Calu3 (cell line): ENCODE measurements at regions of chr16 and their contacts with region 1.

Region 1: GRCh38 chr16:88785106-88785924 is at the start of gene PIEZO1:
- DNase-seq: peak; percentile 86
- H3K4me3 Mint-ChIP-seq: peak within 1 kb of the TSS; percentile 75
- H3K27ac Mint-ChIP-seq: peak within 1 kb of the TSS; percentile 26
- H3K4me1 Mint-ChIP-seq: peaks cover 37% of the 10 kb centered on the region
- H3K27me3 Mint-ChIP-seq: no peaks in the 10 kb centered on the region
- CTCF ChIP-seq: peak; percentile 96
- total RNA-seq, gene PIEZO1: 177 and 199 TPM in 2 replicates

Region 2: GRCh38 chr16:88737298-88738150 is 47.8 kb before region 1 on chr16:
- CTCF ChIA-PET with region 1: interaction called, 39 read pairs
- intact Hi-C with region 1: no loop called
- DNase-seq: peak; percentile 75
- H3K4me3 Mint-ChIP-seq: no peak overlapping the region
- H3K27ac Mint-ChIP-seq: no peak overlapping the region
- H3K4me1 Mint-ChIP-seq: no peaks in the 10 kb centered on the region
- H3K27me3 Mint-ChIP-seq: no peaks in the 10 kb centered on the region
- CTCF ChIP-seq: peak; percentile 99

Region 3: GRCh38 chr16:88743693-88744576 is 41.4 kb before region 1 on chr16:
- CTCF ChIA-PET with region 1: interaction called, 7 read pairs
- intact Hi-C with region 1: loop called (anchors 2 kb)
- DNase-seq: peak; percentile 94
- H3K4me3 Mint-ChIP-seq: peak overlapping the region; percentile 24
- H3K27ac Mint-ChIP-seq: no peak overlapping the region
- H3K4me1 Mint-ChIP-seq: peaks cover 8% of the 10 kb centered on the region
- H3K27me3 Mint-ChIP-seq: no peaks in the 10 kb centered on the region
- CTCF ChIP-seq: peak; percentile 90

Region 4: DNA sequence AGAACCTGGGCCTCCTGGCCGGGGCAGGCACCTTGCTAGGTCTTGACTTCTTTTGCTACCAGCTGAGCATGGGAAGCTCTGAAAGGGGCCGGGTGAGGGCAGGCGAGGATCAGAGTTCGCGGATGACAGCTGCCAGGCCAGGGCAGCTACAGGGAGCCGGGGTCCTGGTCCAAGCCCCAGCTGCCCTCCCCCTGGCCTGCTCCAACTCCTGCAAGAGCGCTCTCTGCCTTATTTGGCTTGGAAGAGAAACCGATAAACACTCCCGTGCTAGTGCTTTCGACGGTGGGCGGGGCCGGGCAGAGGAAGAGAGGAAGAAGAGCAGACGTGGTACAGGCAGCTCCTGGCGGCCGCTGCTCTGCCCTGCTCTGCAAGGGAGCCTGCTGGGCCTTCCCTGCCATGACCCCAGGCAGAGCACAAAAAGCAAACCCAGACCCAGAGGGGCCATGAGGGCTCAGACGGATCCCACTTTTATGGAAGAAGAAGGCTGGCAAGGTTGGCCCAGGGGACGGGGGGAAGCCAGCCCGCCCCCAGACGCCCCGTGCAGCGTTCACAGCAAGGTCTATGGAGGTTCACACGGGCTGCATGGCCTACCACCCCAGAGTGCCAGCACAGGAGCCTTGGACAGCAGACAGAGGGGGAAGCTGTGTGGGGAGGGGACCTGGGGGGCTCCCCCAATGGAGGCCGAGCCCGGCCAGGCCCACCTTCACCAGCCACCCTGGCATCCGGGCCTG is 25.9 kb before region 1 on chr16:
- CTCF ChIA-PET with region 1: interaction called, 26 read pairs
- intact Hi-C with region 1: no loop called
- DNase-seq: no peak
- H3K4me3 Mint-ChIP-seq: peak overlapping the region; percentile 28
- H3K27ac Mint-ChIP-seq: no peak overlapping the region
- H3K4me1 Mint-ChIP-seq: peaks cover 52% of the 10 kb centered on the region
- H3K27me3 Mint-ChIP-seq: no peaks in the 10 kb centered on the region
- CTCF ChIP-seq: no peak

Region 5: GRCh38 chr16:88821168-88821850 is 36.0 kb after region 1 on chr16:
- CTCF ChIA-PET with region 1: no interaction called
- intact Hi-C with region 1: no loop called
- DNase-seq: no peak
- H3K4me3 Mint-ChIP-seq: no peak overlapping the region
- H3K27ac Mint-ChIP-seq: no peak overlapping the region
- H3K4me1 Mint-ChIP-seq: no peaks in the 10 kb centered on the region
- H3K27me3 Mint-ChIP-seq: no peaks in the 10 kb centered on the region
- CTCF ChIP-seq: no peak